ENCODE measurements at regions of chr15 and their contacts with region 1.

Region 1: GRCh38 chr15:97981758-97982157 is 21.3 kb downstream of the ARRDC4 start:
- DNase-seq: no peak
- H3K4me3 ChIP-seq: no peak overlapping the region
- H3K4me3 Mint-ChIP-seq: no peak overlapping the region
- H3K27ac ChIP-seq: no peak overlapping the region
- H3K27ac Mint-ChIP-seq: peak overlapping the region in 1 of 7 donors; percentile 22
- H3K4me1 ChIP-seq: peaks cover 10% of the 10 kb centered on the region
- H3K4me1 Mint-ChIP-seq: peaks cover 0 to 16% (median 7%) of the 10 kb centered on the region in 4 donors
- H3K27me3 ChIP-seq: no peaks in the 10 kb centered on the region
- H3K27me3 Mint-ChIP-seq: no peaks in the 10 kb centered on the region

Region 2: GRCh38 chr15:97995881-97996603 is 14.3 kb after region 1 on chr15:
- CTCF ChIA-PET with region 1: interaction called, 10 read pairs
- POLR2A ChIA-PET with region 1: interaction called, 3 read pairs
- intact Hi-C with region 1: no loop called
- DNase-seq: no peak
- H3K4me3 ChIP-seq: peak overlapping the region in 1 of 2 donors; percentile 1
- H3K4me3 Mint-ChIP-seq: peak overlapping the region; percentile 3 to 62 (median 30)
- H3K27ac ChIP-seq: no peak overlapping the region
- H3K27ac Mint-ChIP-seq: peak overlapping the region in 3 of 7 donors; percentile 2 to 43 (median 6)
- H3K4me1 ChIP-seq: peaks cover 10% of the 10 kb centered on the region
- H3K4me1 Mint-ChIP-seq: peaks cover 10 to 14% (median 13%) of the 10 kb centered on the region in 4 donors
- H3K27me3 ChIP-seq: no peaks in the 10 kb centered on the region
- H3K27me3 Mint-ChIP-seq: no peaks in the 10 kb centered on the region

Region 3: DNA sequence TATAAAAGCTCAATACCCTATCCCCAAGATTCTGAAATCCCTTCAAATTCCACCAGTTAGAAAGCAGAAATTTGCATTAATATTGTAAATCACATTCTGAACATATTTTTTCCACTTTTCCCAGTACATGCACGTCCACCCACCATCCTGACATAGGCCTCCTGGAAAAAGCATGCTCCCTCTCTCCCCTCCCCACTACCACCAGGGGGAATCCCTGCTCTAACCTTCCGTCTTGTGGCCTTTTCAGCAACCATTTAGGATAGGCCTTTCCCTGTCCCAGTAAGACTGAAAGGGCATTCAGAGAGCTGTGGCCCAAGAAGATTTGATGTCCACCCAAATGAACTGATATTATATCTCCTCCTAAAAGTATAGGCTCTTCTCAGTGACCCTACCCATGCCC is 160.8 kb after region 1 on chr15:
- CTCF ChIA-PET with region 1: no interaction called
- POLR2A ChIA-PET with region 1: no interaction called
- intact Hi-C with region 1: no loop called
- DNase-seq: no peak
- H3K4me3 ChIP-seq: no peak overlapping the region
- H3K4me3 Mint-ChIP-seq: no peak overlapping the region
- H3K27ac ChIP-seq: no peak overlapping the region
- H3K27ac Mint-ChIP-seq: no peak overlapping the region
- H3K4me1 ChIP-seq: no peaks in the 10 kb centered on the region
- H3K4me1 Mint-ChIP-seq: peaks cover 0 to 10% (median 3%) of the 10 kb centered on the region in 4 donors
- H3K27me3 ChIP-seq: no peaks in the 10 kb centered on the region
- H3K27me3 Mint-ChIP-seq: peaks cover 0 to 2% of the 10 kb centered on the region in 2 donors